CD8-positive, alpha-beta memory T cell (primary cell): ENCODE measurements at regions of chr19 and their contacts with region 1.

Region 1: GRCh38 chr19:50357178-50358100 is 8.0 kb downstream of the NAPSA start:
- DNase-seq: peak; percentile 81 to 92 (median 84)
- H3K4me3 ChIP-seq: peak overlapping the region; percentile 86
- H3K4me3 Mint-ChIP-seq: peak overlapping the region; percentile 89 to 97 (median 90)
- H3K27ac ChIP-seq: peak overlapping the region; percentile 97
- H3K27ac Mint-ChIP-seq: peak overlapping the region; percentile 95 to 99 (median 98)
- H3K4me1 ChIP-seq: peaks cover 28% of the 10 kb centered on the region
- H3K4me1 Mint-ChIP-seq: peaks cover 21 to 40% (median 38%) of the 10 kb centered on the region in 3 donors
- H3K27me3 ChIP-seq: no peaks in the 10 kb centered on the region
- H3K27me3 Mint-ChIP-seq: peaks cover 1 to 4% of the 10 kb centered on the region in 2 donors

Region 2: DNA sequence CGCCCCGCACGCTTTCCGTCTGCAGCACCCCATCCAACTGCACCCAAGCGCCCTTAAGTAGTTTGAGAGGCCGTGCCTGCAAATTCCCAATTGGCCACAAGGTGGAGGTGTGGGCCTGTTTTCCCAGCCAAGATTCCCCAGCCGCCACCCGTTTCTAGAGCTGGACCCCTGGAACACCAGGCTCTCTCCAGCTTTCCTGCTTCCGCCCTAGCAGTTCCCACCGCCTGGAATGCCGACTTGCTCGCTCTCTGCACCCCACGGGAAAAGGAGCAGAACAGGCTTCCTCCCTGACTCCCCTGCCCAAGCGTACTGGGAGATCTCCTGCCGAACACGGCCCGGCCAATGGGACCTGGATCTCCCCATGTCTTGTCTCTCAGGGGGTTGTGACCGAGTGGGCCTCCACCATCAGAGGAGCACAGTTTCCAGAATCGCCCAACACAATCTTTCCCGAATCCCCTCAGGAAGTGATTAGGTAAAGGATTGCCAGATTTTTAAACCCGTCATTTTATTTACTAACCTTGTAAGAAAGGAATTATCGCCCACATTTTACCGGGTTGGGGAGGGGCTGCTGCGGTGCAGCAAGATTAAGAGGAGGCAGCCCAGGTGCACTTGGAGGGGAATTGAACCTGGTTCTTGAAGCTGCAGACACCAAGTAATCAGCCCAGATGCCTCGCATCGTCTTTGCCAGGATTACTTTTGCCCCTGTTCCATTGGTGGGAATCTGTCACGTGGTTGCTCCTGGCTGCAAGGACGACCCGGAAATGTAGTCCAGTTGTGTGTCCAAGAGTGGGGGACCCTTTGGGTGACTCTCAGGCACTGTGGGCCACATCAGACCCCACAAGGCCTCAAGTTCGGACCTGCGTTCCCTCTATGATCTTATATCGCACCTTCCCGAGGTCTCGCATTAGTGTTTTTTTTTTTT is 11.5 kb after region 1 on chr19:
- CTCF ChIA-PET with region 1: interaction called, 22 read pairs
- POLR2A ChIA-PET with region 1: interaction called, 7 read pairs
- DNase-seq: peak; percentile 67 to 84 (median 76)
- H3K4me3 ChIP-seq: peak overlapping the region; percentile 81
- H3K4me3 Mint-ChIP-seq: peak overlapping the region; percentile 84 to 97 (median 90)
- H3K27ac ChIP-seq: peak overlapping the region; percentile 72
- H3K27ac Mint-ChIP-seq: peak overlapping the region; percentile 42 to 96 (median 86)
- H3K4me1 ChIP-seq: peaks cover 12% of the 10 kb centered on the region
- H3K4me1 Mint-ChIP-seq: peaks cover 25 to 38% (median 34%) of the 10 kb centered on the region in 3 donors
- H3K27me3 ChIP-seq: no peaks in the 10 kb centered on the region
- H3K27me3 Mint-ChIP-seq: peaks cover 0 to 3% of the 10 kb centered on the region in 2 donors

Region 3: DNA sequence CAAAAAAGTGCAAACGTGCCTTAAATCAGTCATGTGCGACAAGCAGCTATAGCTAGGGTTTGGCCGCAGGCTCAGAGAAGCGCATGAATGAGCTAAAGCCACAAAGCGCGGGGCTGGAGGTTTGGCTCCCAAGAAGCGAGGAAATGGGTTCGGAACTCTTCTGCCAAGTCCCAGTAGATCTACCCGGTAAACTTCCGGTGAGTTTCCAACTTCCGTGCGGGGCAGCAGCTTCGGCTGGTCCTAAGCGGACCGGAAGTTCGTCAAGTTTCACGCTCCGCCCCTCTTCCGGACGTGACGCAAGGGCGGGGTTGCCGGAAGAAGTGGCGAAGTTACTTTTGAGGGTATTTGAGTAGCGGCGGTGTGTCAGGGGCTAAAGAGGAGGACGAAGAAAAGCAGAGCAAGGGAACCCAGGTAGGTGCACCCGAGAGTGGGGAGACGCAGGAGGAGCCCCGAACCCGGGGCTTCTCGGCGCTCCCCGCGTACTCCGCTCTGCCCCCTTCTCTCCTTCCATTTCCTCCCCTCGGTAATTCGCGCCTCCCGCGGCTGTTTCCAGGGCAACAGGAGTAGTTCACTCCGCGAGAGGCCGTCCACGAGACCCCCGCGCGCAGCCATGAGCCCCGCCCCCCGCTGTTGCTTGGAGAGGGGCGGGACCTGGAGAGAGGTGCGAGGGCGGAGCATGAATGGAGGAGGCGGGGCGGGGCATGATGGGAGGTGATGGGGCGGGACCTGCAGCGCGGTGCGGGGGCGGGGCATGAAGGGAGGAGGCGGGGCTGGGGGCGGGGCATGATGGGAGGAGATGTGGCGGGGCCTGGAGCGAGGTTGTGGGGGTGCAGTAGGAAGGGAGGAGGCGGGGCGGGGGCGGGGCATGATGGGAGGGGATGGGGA is 19.0 kb after region 1 on chr19 and contains the start of gene NR1H2:
- CTCF ChIA-PET with region 1: interaction called, 7 read pairs
- POLR2A ChIA-PET with region 1: interaction called, 19 read pairs
- DNase-seq: peak; percentile 90 to 96 (median 94)
- H3K4me3 ChIP-seq: peak within 1 kb of the TSS; percentile 97
- H3K4me3 Mint-ChIP-seq: peak within 1 kb of the TSS; percentile 85 to 100 (median 97)
- H3K27ac ChIP-seq: peak within 1 kb of the TSS; percentile 100
- H3K27ac Mint-ChIP-seq: peak within 1 kb of the TSS; percentile 92 to 100 (median 100)
- H3K4me1 ChIP-seq: peaks cover 13% of the 10 kb centered on the region
- H3K4me1 Mint-ChIP-seq: peaks cover 11 to 31% (median 23%) of the 10 kb centered on the region in 3 donors
- H3K27me3 ChIP-seq: no peaks in the 10 kb centered on the region
- H3K27me3 Mint-ChIP-seq: peaks cover 0 to 3% of the 10 kb centered on the region in 2 donors
- total RNA-seq, gene NR1H2: 79.7 to 82.3 TPM

Region 4: GRCh38 chr19:50383852-50384684 is 26.6 kb after region 1 on chr19 and contains the start of gene POLD1:
- CTCF ChIA-PET with region 1: interaction called, 7 read pairs
- POLR2A ChIA-PET with region 1: interaction called, 13 read pairs
- DNase-seq: peak; percentile 99
- H3K4me3 ChIP-seq: peak within 1 kb of the TSS; percentile 46
- H3K4me3 Mint-ChIP-seq: peak within 1 kb of the TSS; percentile 85 to 97 (median 93)
- H3K27ac ChIP-seq: peak within 1 kb of the TSS; percentile 49
- H3K27ac Mint-ChIP-seq: peak within 1 kb of the TSS; percentile 84 to 98 (median 92)
- H3K4me1 ChIP-seq: peaks cover 16% of the 10 kb centered on the region
- H3K4me1 Mint-ChIP-seq: peaks cover 28 to 45% (median 41%) of the 10 kb centered on the region in 3 donors
- H3K27me3 ChIP-seq: no peaks in the 10 kb centered on the region
- H3K27me3 Mint-ChIP-seq: peaks cover 0 to 8% of the 10 kb centered on the region in 2 donors
- total RNA-seq, gene POLD1: 154 to 160 TPM

Region 5: DNA sequence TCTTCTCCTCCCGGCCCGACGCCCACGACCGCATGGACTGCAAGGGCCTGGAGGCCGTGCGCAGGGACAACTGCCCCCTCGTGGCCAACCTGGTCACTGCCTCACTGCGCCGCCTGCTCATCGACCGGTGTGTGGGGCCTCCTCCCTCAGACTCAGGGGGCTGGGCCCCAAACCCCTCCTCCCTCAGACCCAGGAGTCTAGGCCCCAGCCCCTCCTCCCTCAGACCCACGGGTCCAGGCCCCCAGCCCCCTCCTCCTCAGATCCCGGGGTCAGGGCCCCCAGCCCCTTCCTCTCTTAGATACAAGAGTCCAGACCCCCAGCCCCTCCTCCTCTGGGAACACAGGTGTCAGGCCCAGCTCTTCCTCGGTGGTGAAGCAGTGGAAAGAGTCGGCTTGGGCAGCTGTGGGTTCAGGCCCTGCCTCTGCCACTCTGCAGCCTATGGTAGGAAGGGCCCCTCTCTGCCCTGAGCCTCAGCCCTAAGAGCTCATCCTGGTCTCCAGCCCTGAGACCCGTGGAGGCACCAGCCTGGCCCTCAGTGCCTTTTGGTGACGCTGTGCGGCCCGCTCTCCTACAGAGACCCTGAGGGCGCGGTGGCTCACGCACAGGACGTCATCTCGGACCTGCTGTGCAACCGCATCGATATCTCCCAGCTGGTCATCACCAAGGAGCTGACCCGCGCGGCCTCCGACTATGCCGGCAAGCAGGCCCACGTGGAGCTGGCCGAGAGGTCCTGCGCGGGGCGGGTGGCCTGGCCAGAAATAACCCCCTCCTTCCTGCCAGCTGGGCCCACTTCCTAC is 57.6 kb after region 1 on chr19:
- CTCF ChIA-PET with region 1: interaction called, 11 read pairs
- POLR2A ChIA-PET with region 1: no interaction called
- DNase-seq: peak; percentile 51 to 78 (median 63)
- H3K4me3 ChIP-seq: no peak overlapping the region
- H3K4me3 Mint-ChIP-seq: peak overlapping the region in 1 of 7 donors; percentile 12
- H3K27ac ChIP-seq: peak overlapping the region; percentile 38
- H3K27ac Mint-ChIP-seq: peak overlapping the region in 1 of 8 donors; percentile 66
- H3K4me1 ChIP-seq: no peaks in the 10 kb centered on the region
- H3K4me1 Mint-ChIP-seq: peaks cover 4 to 9% (median 7%) of the 10 kb centered on the region in 3 donors
- H3K27me3 ChIP-seq: peaks cover 11% of the 10 kb centered on the region
- H3K27me3 Mint-ChIP-seq: peaks cover 3 to 11% of the 10 kb centered on the region in 2 donors

Region 6: DNA sequence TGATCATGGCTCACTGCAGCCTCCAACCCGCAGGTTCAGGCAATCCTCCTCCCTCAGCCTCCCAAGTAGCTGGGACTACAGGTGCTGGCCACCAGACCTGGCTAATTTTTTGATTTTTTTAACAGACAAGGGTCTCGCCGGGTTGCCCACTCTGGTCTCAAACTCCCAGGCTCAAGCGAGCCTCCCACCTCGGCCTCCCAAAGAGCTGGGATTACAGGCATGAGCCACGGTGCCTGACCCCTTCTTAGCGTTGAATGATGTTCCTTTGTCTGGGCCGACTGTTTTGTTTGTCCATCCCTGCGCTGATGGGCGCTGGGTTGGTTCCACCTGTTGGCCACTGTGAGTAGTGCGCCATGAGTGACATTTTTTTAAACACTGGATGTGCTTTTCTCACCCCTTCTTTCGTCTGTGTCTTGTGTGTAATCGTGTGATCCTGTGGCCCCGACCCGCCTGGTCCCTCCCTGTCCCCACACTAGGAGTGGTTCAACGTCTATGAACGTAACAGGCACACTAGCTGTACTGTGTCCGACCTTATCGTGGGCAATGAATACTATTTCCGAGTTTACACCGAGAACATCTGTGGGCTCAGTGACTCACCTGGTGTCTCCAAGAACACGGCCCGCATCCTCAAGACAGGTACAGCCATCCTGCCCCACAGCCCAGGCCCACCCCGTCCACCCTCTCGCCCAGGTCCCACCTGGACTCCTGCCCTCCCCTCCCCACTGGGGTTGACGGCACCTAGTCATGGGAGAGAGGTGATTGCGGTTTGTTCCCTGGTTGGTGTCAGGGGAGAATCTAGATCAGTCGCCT is 103.8 kb after region 1 on chr19:
- CTCF ChIA-PET with region 1: interaction called, 27 read pairs
- POLR2A ChIA-PET with region 1: no interaction called
- DNase-seq: peak; percentile 28 to 63 (median 42)
- H3K4me3 ChIP-seq: no peak overlapping the region
- H3K4me3 Mint-ChIP-seq: no peak overlapping the region
- H3K27ac ChIP-seq: no peak overlapping the region
- H3K27ac Mint-ChIP-seq: peak overlapping the region in 1 of 8 donors; percentile 47
- H3K4me1 ChIP-seq: no peaks in the 10 kb centered on the region
- H3K4me1 Mint-ChIP-seq: peaks cover 0 to 3% (median 1%) of the 10 kb centered on the region in 3 donors
- H3K27me3 ChIP-seq: no peaks in the 10 kb centered on the region
- H3K27me3 Mint-ChIP-seq: peaks cover 5 to 27% of the 10 kb centered on the region in 2 donors

Region 7: GRCh38 chr19:50922317-50922853 is 564.9 kb after region 1 on chr19:
- CTCF ChIA-PET with region 1: interaction called, 10 read pairs
- POLR2A ChIA-PET with region 1: no interaction called
- DNase-seq: peak; percentile 54 to 76 (median 59)
- H3K4me3 ChIP-seq: no peak overlapping the region
- H3K4me3 Mint-ChIP-seq: no peak overlapping the region
- H3K27ac ChIP-seq: no peak overlapping the region
- H3K27ac Mint-ChIP-seq: no peak overlapping the region
- H3K4me1 ChIP-seq: peaks cover 4% of the 10 kb centered on the region
- H3K4me1 Mint-ChIP-seq: peaks cover 7 to 10% (median 8%) of the 10 kb centered on the region in 3 donors
- H3K27me3 ChIP-seq: peaks cover 12% of the 10 kb centered on the region
- H3K27me3 Mint-ChIP-seq: peaks cover 23 to 45% of the 10 kb centered on the region in 2 donors